Activated CD4-positive, alpha-beta memory T cell treated with anti-CD3 and anti-CD28 coated beads for 36 hours (primary cell): ENCODE measurements at regions of chr3 and their contacts with region 1.

Region 1: GRCh38 chr3:64023187-64023848 is at the start of gene PSMD6:
- DNase-seq: peak; percentile 95
- H3K4me3 Mint-ChIP-seq: peak within 1 kb of the TSS; percentile 85
- H3K27ac Mint-ChIP-seq: peak within 1 kb of the TSS; percentile 76
- H3K4me1 Mint-ChIP-seq: peaks cover 27% of the 10 kb centered on the region
- H3K27me3 Mint-ChIP-seq: peaks cover 5% of the 10 kb centered on the region
- total RNA-seq, gene PSMD6: 104 to 109 TPM

Region 2: DNA sequence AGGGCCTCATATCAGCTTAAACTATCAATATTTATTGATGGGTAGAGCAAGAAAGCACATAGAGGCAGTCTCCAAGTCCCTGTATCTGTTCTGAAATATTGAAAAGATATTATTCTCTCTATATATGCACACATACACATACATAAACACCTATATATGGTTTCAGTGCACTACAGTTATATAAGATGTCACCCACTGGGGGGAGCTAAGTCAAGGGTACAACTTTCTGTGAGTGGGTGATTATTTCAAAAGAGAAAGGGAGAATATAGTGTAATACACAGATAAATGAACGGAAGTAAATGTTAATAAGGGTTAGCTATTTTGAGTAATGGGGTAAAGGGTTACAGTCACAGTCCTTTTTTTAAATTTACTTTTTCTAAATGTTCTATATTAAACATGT is 362.1 kb before region 1 on chr3:
- CTCF ChIA-PET with region 1: no interaction called
- POLR2A ChIA-PET with region 1: no interaction called
- intact Hi-C with region 1: no loop called
- DNase-seq: no peak
- H3K4me3 Mint-ChIP-seq: no peak overlapping the region
- H3K27ac Mint-ChIP-seq: no peak overlapping the region
- H3K4me1 Mint-ChIP-seq: no peaks in the 10 kb centered on the region
- H3K27me3 Mint-ChIP-seq: peaks cover 3% of the 10 kb centered on the region

Region 3: DNA sequence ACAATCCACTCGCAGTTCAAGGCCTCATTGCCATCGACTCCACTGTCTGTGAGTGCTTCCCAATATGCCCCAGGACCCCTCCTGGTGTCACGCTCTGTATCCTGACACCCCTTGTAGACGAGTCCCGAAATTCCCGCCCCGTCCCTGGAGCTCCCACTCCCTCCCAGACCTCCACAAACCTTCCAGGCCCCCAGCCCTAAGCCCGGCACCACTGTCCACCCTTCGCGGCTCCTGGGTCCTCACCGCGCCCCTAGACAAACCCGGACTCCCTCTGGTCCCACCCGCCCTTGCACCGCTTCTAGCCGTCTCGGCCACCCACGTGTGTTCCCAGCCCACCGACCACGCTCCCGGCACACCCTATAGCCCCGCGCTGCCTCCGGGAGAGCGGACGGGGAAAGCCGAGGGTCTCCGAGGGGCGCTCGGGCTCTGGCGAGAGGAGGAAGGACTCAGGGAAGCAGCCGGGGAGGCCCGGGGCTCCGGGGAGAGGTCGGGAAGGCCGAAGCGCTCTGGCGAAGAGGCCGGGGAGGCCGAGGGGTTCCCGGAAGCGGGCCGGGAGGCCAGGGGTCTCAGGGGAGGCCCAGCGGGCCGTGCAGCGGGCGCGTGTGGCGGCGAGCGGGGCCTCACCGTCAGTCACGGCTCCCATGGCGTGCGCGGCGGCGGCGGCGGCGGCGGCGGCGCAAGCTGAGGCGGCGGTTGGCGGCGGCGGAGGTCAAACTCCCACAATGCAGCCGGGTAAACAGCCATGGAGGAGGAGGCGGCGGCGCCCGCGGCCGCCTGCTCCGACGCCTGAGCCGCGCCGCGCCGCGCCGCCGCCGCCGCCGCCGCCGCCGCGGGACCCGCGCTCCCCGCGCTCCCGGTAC is 159.9 kb before region 1 on chr3 and contains the starts of genes ATXN7 and THOC7:
- CTCF ChIA-PET with region 1: interaction called, 6 read pairs
- POLR2A ChIA-PET with region 1: no interaction called
- intact Hi-C with region 1: loop called (anchors 5 kb)
- DNase-seq: peak; percentile 70
- H3K4me3 Mint-ChIP-seq: peak within 1 kb of the TSS; percentile 92
- H3K27ac Mint-ChIP-seq: peak within 1 kb of the TSS; percentile 93
- H3K4me1 Mint-ChIP-seq: peaks cover 43% of the 10 kb centered on the region
- H3K27me3 Mint-ChIP-seq: no peaks in the 10 kb centered on the region
- total RNA-seq, gene ATXN7: 26.3 to 29.4 TPM
- total RNA-seq, gene THOC7: 85.2 to 88.9 TPM

Region 4: DNA sequence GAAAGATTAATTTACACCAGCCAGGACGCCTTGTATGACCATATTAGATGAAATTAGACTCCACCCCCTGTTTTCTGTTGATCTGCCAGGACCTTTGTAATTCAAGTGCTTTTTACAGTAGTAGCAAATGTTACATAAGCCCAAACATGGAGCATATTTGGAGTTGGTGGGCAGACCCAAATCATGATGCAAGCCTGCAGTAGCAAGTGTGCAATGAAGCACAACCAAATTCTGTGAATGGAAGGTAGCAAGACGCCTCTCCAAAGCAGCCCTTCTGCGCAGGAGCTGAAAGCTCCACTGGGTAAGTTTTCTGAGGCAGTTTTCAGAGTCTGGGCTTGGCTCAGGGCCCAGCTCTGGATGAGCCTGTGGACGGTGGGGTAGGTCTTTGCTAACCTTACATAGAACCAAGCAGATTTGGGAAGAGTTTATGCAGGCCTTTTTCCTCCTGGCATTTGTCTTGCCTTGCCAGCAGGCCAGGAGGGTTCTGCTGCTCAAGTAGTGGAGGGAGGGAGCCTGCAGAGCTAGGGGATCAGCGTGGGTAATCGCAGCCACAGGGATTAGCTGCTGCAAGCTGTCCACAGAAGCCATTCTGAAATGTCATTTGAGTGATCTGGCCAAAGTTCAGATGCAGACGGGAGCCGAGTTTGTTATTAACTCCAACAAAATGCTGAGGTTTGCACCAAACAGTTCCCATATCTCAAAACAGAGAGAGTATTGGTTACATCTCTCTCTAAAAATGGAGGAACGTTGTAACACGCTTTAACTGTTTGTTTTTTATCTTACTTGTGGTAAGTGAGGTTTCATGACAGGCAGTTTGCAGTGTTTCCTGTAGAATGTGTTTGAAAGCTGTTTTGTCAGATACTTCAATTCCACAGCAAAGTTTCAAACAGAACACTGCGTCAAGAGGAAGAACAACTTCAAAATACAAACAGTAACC is 55.4 kb before region 1 on chr3:
- CTCF ChIA-PET with region 1: interaction called, 3 read pairs
- POLR2A ChIA-PET with region 1: interaction called, 5 read pairs
- intact Hi-C with region 1: loop called (anchors 2 kb)
- DNase-seq: peak; percentile 45
- H3K4me3 Mint-ChIP-seq: peak overlapping the region; percentile 71
- H3K27ac Mint-ChIP-seq: peak overlapping the region; percentile 90
- H3K4me1 Mint-ChIP-seq: peaks cover 88% of the 10 kb centered on the region
- H3K27me3 Mint-ChIP-seq: no peaks in the 10 kb centered on the region

Region 5: DNA sequence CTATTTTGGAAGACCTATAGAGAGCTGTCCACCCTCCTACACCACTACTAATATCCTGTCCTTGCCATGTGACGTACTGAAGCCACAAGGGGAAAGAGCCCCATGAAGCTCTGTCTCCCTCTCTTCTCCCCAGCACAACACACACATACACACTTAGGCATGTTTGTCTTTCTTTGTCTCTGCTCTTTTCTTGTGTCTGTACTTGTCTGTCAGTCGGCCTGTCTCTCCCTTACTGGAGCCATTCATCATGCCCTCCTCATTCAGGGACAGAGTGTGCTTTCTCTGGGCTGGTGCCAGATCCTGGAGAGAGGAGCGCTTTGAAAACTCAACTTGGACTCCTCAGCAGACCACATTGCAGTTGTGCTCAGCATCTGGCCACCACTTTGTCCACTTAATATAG is 47.6 kb before region 1 on chr3:
- CTCF ChIA-PET with region 1: interaction called, 11 read pairs
- POLR2A ChIA-PET with region 1: no interaction called
- intact Hi-C with region 1: no loop called
- DNase-seq: no peak
- H3K4me3 Mint-ChIP-seq: no peak overlapping the region
- H3K27ac Mint-ChIP-seq: peak overlapping the region; percentile 63
- H3K4me1 Mint-ChIP-seq: peaks cover 92% of the 10 kb centered on the region
- H3K27me3 Mint-ChIP-seq: no peaks in the 10 kb centered on the region

Region 6: DNA sequence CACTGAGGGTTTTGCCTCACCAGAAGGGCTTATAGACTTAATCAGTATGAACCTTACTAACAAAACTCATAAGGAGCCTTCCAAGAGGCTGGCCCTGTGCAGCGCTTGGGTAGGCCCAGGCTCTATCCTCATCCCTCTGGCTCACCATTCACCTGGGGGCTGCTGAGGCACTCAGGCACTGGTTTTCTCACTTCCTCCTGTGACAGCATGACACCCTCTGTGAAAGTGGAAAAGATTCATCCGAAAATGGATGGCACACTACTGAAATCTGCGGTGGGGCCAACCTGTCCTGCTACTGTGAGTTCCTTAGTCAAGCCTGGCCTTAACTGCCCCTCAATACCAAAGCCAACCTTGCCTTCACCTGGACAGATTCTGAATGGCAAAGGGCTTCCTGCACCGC is 41.3 kb before region 1 on chr3:
- CTCF ChIA-PET with region 1: interaction called, 11 read pairs
- POLR2A ChIA-PET with region 1: no interaction called
- intact Hi-C with region 1: loop called (anchors 1 kb)
- DNase-seq: peak; percentile 24
- H3K4me3 Mint-ChIP-seq: no peak overlapping the region
- H3K27ac Mint-ChIP-seq: peak overlapping the region; percentile 75
- H3K4me1 Mint-ChIP-seq: peaks cover 79% of the 10 kb centered on the region
- H3K27me3 Mint-ChIP-seq: no peaks in the 10 kb centered on the region

Region 7: DNA sequence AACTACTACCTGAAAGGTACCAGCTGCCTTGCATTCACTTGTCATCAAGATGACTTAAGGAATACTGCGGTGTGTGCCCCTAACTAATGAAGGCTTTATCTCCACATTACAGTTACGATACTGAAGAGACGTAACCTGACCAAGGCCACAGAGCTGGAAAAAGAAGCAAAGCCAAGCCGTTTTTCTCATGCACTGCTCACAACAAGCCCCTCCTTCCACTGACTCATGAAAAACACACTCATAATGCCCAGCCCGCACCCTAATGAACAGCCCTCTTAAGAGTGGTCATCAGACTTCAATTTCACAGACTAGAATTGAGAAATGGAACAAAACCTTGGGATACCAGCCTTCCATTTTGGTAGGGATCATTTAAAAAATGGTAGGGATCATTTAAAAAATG is 11.6 kb before region 1 on chr3:
- CTCF ChIA-PET with region 1: interaction called, 21 read pairs
- POLR2A ChIA-PET with region 1: interaction called, 10 read pairs
- intact Hi-C with region 1: no loop called
- DNase-seq: no peak
- H3K4me3 Mint-ChIP-seq: no peak overlapping the region
- H3K27ac Mint-ChIP-seq: peak overlapping the region; percentile 39
- H3K4me1 Mint-ChIP-seq: peaks cover 35% of the 10 kb centered on the region
- H3K27me3 Mint-ChIP-seq: no peaks in the 10 kb centered on the region

Region 8: GRCh38 chr3:64289622-64290021 is 266.3 kb after region 1 on chr3:
- CTCF ChIA-PET with region 1: no interaction called
- POLR2A ChIA-PET with region 1: no interaction called
- intact Hi-C with region 1: no loop called
- DNase-seq: no peak
- H3K4me3 Mint-ChIP-seq: no peak overlapping the region
- H3K27ac Mint-ChIP-seq: no peak overlapping the region
- H3K4me1 Mint-ChIP-seq: no peaks in the 10 kb centered on the region
- H3K27me3 Mint-ChIP-seq: no peaks in the 10 kb centered on the region